IMR-90 (cell line): ENCODE measurements at regions of chr4 and their contacts with region 1.

Region 1: DNA sequence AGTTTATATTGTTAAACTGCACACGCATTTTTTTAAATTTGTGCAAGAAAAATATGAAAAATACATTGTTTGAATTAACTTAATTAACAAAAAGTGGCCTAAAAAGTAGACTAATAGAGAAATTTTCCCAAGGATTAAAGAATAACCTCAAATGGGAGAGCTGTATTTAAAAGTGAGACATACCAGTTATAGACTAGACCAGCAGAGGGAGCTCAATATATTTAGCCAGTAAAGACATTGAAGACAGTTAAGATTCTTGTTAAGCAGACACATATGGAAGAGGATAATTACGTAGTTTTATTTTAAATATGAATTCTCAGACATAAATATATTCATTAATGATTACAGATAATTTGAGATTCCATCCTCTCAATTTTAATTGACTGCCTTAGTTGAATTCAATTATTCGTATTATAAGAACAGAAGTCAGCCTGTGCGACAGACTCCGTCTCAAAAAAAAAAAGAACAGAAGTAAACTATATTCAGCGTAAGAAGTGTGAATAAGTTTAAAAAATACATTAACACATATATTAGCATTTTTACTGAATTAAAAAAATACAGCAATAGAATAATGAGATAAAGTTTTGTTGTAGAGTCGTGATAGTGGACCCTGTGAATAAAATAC is 64.8 kb downstream of the GLRA3 start:
- DNase-seq: peak; percentile 40
- ATAC-seq: no peak
- H3K4me3 ChIP-seq: no peak overlapping the region
- H3K27ac ChIP-seq: no peak overlapping the region
- H3K4me1 ChIP-seq: no peaks in the 10 kb centered on the region
- H3K27me3 ChIP-seq: no peaks in the 10 kb centered on the region
- CTCF ChIP-seq: peak; percentile 61
- POLR2A ChIP-seq: no peak
- RAD21 ChIP-seq: peak; percentile 52

Region 2: GRCh38 chr4:175443547-175443946 is 679.3 kb after region 1 on chr4:
- CTCF ChIA-PET with region 1: no interaction called
- POLR2A ChIA-PET with region 1: no interaction called
- dilution Hi-C with region 1: no loop called
- in situ Hi-C with region 1: no loop called
- intact Hi-C with region 1: loop called (anchors 1 kb)
- DNase-seq: no peak
- ATAC-seq: no peak; the same call in 1 of the 2 replicates
- H3K4me3 ChIP-seq: no peak overlapping the region
- H3K27ac ChIP-seq: no peak overlapping the region
- H3K4me1 ChIP-seq: no peaks in the 10 kb centered on the region
- H3K27me3 ChIP-seq: no peaks in the 10 kb centered on the region
- CTCF ChIP-seq: peak; percentile 31
- POLR2A ChIP-seq: no peak
- RAD21 ChIP-seq: peak; percentile 33; the same call in 1 of the 2 replicates

Region 3: GRCh38 chr4:175536852-175537453 is 772.7 kb after region 1 on chr4:
- CTCF ChIA-PET with region 1: no interaction called
- POLR2A ChIA-PET with region 1: no interaction called
- dilution Hi-C with region 1: no loop called
- in situ Hi-C with region 1: loop called (anchors 25 kb)
- intact Hi-C with region 1: loop called (anchors 1 kb)
- DNase-seq: peak; percentile 62
- ATAC-seq: peak; percentile 46
- H3K4me3 ChIP-seq: no peak overlapping the region
- H3K27ac ChIP-seq: no peak overlapping the region
- H3K4me1 ChIP-seq: no peaks in the 10 kb centered on the region
- H3K27me3 ChIP-seq: no peaks in the 10 kb centered on the region
- CTCF ChIP-seq: peak; percentile 58
- POLR2A ChIP-seq: no peak
- RAD21 ChIP-seq: peak; percentile 77